ENCODE measurements at regions of chr6 and their contacts with region 1.

Region 1: DNA sequence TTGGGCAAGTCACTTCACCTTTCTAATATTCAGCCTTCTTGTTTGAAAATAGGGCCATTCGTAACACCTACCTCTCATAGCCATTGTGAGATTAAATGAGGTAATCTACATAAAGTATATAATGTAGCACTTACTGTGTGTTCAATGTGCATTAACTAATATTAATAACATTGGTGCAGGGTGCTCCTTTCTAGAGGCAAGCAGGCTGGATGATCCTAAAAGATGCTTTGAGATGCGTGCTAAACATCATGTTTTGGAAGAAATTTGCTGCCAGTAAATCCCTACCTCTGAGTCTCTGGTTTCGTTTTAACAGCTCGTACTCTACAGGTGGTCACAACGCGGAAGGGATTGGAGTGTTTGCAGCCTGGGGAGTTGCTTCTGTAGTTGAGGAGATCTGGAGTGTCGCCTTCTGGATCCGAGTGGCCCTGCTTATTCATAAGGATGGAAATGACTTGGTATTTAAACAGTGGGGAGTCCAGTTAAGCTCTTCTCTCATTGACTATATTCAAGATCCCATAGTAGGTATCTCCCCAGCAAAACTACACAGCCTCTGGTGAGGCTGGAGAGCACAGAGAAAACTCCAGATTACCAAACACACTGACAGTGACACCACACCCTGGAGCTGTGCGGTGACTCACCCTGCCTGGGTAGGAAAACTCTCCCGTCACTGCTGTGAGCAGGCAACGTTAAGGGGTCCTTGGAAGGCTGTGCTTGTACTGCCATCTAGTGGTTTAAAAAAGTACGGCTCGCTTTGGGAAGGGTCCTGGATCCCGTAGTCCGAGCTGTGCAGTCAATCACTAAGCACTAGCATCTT is 107.9 kb downstream of the MAP3K7 start:
- DNase-seq: peak; percentile 74 to 97 (median 89)

Region 2: GRCh38 chr6:89940225-89941027 is 538.6 kb before region 1 on chr6:
- intact Hi-C with region 1: loop called (anchors 5 kb)
- DNase-seq: peak; percentile 42 to 91 (median 80)

Region 3: GRCh38 chr6:89970609-89971337 is 508.2 kb before region 1 on chr6:
- intact Hi-C with region 1: loop called (anchors 2 kb)
- DNase-seq: peak in 41 of 42 donors; percentile 27 to 82 (median 61)

Region 4: GRCh38 chr6:90216072-90216977 is 262.7 kb before region 1 on chr6:
- intact Hi-C with region 1: loop called (anchors 10 kb)
- DNase-seq: peak in 3 of 42 donors; percentile 11 to 23 (median 15)

Region 5: DNA sequence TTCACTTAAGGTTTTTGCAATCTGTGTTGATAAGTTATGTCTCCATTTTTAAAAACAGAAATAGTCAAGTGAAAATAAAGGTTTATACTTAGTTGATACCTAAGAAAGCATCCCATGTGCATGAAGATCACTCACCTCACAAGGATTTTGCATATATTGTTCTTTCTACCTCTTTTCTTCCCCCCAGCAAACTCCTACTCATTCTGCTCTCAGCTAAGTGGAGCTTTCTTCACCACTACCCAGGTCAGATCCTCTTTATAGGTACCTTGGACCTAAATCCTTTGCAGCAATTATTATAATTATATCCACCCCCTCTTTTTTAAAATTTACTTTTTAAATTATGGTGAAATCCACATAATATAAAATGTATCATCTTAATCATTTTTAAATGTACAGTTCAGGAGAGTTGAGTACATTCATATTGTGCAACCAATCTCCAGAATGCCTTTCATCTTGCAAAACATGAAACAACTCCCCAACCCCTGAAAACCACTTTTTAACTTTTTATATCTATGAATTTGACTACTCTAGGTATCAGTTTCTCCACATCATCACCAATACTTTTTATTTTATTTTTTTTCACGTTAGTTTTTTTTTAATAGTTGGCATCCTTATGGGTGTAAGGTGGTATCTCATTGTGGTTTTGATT is 173.1 kb before region 1 on chr6:
- intact Hi-C with region 1: loop called (anchors 5 kb)
- DNase-seq: no peak

Measured in head of caudate nucleus (tissue), 42 donors.